ENCODE measurements at regions of chr18 and their contacts with region 1.

Region 1: DNA sequence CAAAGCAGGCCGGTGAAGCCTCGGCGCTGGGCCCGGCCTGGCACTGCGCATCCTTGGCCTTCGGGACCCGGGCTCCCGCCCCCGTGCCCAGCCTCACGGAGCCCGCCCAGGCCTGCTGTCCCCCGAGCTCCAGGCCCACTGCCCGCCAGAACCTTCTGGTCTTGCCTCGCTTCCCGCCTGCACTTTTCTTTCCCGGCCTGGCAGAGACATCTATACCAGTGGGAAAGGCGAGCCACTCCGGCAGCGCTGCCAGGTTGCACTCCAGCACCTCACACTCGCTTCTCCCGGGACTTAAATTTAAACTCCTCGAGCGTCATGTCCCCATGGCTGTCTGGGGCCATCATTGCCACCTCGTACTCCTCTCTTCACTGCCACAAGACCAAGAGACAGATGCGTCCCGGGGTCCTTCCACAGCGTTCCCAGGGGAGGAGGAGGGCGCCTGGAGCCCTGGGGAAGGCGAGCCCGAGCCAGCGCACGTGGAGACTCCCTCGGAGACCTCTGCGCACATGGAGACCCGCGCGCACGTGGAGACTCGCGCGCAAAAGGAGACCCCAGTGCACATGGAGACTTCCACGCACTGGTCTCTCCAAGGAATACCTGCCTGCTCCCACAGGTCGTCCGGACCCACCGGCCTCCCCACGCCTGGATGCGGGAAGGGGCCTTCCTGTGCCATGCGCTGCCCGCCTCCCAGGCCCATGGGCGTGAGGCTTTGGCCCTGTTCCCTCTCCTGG is 253.1 kb upstream of the SALL3 start:
- DNase-seq: peak in 1 of 2 donors; percentile 77
- H3K4me3 ChIP-seq: no peak overlapping the region
- CTCF ChIP-seq: no peak
- POLR2A ChIP-seq: no peak

Region 2: GRCh38 chr18:77711096-77711495 is 1015.4 kb before region 1 on chr18:
- intact Hi-C with region 1: no loop called
- DNase-seq: no peak
- H3K4me3 ChIP-seq: no peak overlapping the region
- CTCF ChIP-seq: no peak
- POLR2A ChIP-seq: no peak

Region 3: GRCh38 chr18:78429127-78430108 is 297.1 kb before region 1 on chr18:
- intact Hi-C with region 1: loop called (anchors 5 kb)
- DNase-seq: no peak
- H3K4me3 ChIP-seq: no peak overlapping the region
- CTCF ChIP-seq: no peak
- POLR2A ChIP-seq: no peak

Region 4: GRCh38 chr18:78632111-78632541 is 94.4 kb before region 1 on chr18:
- intact Hi-C with region 1: no loop called
- DNase-seq: peak; percentile 32 to 59
- H3K4me3 ChIP-seq: no peak overlapping the region
- CTCF ChIP-seq: no peak
- POLR2A ChIP-seq: no peak

Region 5: DNA sequence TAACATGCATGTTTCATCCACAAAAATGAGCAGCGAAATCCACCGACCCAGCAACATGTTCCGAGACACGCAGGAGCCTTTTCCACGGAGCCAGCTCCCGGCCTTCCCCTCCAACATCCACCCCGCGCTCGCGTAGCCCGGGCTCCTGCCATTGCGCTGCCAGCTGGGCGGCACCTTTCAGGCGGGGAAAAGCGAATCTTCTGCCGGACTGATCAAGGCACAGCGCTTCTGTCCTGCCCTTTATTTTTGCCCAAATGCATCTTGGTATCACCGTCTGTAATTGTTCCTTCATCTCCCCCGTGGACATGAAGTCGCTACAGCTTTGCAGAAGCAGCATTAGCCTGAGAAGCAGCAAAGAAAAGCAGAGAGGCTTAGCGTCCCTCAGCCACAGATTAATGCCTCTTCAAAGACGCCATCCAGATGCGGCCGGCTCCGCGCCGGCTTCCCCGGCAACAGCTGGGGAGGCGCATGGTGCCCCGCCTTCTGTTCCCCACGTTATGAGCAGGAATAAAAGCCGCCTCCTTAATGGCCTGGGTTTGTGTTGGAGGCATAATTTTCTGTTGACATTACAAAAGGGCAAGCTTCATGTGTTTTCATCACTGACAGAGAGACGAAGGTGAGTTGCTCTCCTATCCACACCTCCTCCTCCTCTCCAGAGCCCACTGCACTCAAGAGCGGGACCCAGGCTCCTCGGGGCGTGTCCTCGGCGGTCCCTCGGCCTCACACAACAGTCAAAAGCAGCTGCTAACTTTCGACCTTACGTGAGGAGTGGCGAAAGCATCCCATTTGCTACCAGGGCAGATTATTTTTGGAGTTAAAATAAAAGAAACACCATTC is 131.0 kb after region 1 on chr18:
- intact Hi-C with region 1: no loop called
- DNase-seq: no peak
- H3K4me3 ChIP-seq: no peak overlapping the region
- CTCF ChIP-seq: no peak
- POLR2A ChIP-seq: no peak